ENCODE measurements at regions of chr9 and their contacts with region 1.

Region 1: GRCh38 chr9:111896353-111896958 is at the start of gene UGCG:
- DNase-seq: peak; percentile 80 to 95 (median 92)
- ATAC-seq: peak; percentile 97
- H3K4me3 ChIP-seq: peak within 1 kb of the TSS; percentile 87
- H3K4me3 Mint-ChIP-seq: peak within 1 kb of the TSS in 7 of 10 donors; percentile 91 to 96 (median 95)
- H3K27ac ChIP-seq: peak within 1 kb of the TSS; percentile 80
- H3K27ac Mint-ChIP-seq: peak within 1 kb of the TSS; percentile 88 to 95 (median 94)
- H3K4me1 ChIP-seq: peaks cover 17 to 40% of the 10 kb centered on the region in 2 donors
- H3K4me1 Mint-ChIP-seq: peaks cover 7 to 32% (median 29%) of the 10 kb centered on the region in 7 donors
- H3K27me3 ChIP-seq: no peaks in the 10 kb centered on the region
- H3K27me3 Mint-ChIP-seq: no peaks in the 10 kb centered on the region
- total RNA-seq, gene UGCG: 21.1 to 40.9 (median 24.5) TPM

Region 2: DNA sequence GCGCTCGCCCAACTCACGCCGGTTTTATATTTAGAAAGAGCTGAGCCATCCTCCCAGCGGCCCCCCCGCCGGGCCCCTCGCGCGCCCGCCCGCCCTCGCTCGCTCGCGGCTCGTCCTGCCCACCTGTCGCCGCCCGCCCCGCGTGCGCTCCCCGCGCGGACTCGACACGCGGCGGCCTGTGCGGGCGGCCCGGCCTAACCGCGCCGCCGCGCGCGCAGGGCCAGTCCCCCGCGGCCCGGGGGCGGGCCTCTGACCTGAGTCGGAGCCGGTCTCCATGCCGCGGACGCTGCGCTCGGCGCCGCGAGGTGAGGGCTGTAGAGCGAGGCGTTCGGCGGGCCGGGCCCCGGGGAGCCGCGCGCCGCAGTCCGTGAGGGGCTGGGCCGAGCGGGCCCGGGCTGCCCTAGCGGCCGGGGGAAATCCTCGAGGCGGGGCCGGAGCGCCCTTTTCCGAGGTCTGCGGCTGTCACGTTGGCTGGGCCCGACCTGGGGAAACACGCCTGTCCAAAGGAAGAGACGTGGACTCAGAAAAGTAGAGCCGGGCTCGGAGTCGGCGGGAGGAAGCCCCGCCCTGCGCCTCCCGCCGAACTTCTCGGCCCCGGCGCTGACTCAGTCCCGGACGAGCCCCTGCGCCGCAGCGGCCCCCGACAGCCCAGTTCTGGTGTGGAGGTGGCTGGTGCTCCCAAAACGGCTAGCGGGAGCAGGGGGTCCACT is 412.4 kb before region 1 on chr9 and contains the start of gene ECPAS:
- CTCF ChIA-PET with region 1: no interaction called
- POLR2A ChIA-PET with region 1: no interaction called
- intact Hi-C with region 1: loop called (anchors 1 kb)
- DNase-seq: peak; percentile 53 to 78 (median 62)
- ATAC-seq: peak; percentile 74
- H3K4me3 ChIP-seq: peak within 1 kb of the TSS; percentile 66
- H3K4me3 Mint-ChIP-seq: peak within 1 kb of the TSS; percentile 69 to 93 (median 88)
- H3K27ac ChIP-seq: peak within 1 kb of the TSS; percentile 74
- H3K27ac Mint-ChIP-seq: peak within 1 kb of the TSS; percentile 60 to 92 (median 85)
- H3K4me1 ChIP-seq: peaks cover 0 to 8% of the 10 kb centered on the region in 2 donors
- H3K4me1 Mint-ChIP-seq: peaks cover 16 to 31% (median 27%) of the 10 kb centered on the region in 7 donors
- H3K27me3 ChIP-seq: no peaks in the 10 kb centered on the region
- H3K27me3 Mint-ChIP-seq: peaks cover 0 to 13% (median 5%) of the 10 kb centered on the region in 5 donors
- total RNA-seq, gene ECPAS: 35.4 to 86.1 (median 49.2) TPM

Region 3: DNA sequence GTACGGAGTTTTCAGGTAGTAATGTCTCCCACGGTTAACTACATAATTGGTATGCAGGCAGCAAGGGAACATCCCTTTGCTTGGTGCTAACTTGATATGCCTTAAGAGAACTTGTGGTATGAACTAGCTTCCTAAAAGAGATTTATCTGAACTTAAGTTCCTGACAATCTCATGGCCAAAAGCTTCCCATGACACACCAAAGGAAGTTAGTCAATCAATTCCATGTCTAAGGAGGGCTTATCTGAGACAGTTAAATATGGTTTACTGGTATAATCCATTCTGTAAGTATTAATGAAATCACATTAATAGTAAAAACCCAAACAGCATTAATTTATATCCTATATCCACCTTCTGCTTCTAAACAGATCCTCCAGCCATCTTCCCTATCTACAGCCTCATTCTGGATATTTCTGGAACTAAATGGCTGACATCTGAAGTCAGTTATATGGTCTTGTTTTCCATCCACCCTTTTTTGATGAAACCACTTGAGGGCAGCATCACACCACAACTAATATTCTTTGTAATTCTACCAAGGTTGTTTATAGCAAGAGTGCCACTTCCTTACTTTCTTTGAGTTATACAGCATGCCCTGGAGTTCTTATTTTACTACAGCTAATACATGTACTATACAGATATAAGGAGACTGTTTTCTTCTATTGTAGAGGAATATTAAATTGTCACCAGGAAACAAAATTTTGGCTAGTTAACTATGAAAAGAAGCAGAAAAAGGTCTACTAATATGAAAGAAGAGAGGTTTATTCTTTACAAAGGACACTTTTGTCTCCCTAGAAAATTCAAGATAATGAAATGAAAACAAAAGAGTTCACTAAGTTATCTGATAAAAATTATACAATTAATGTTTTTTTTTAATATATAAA is 136.5 kb before region 1 on chr9:
- CTCF ChIA-PET with region 1: interaction called, 3 read pairs
- POLR2A ChIA-PET with region 1: no interaction called
- intact Hi-C with region 1: loop called (anchors 10 kb)
- DNase-seq: peak in 8 of 9 donors; percentile 25 to 77 (median 68)
- ATAC-seq: peak; percentile 82
- H3K4me3 ChIP-seq: no peak overlapping the region
- H3K4me3 Mint-ChIP-seq: no peak overlapping the region
- H3K27ac ChIP-seq: no peak overlapping the region
- H3K27ac Mint-ChIP-seq: no peak overlapping the region
- H3K4me1 ChIP-seq: no peaks in the 10 kb centered on the region
- H3K4me1 Mint-ChIP-seq: peaks cover 3 to 8% (median 5%) of the 10 kb centered on the region in 7 donors
- H3K27me3 ChIP-seq: no peaks in the 10 kb centered on the region
- H3K27me3 Mint-ChIP-seq: no peaks in the 10 kb centered on the region

Region 4: DNA sequence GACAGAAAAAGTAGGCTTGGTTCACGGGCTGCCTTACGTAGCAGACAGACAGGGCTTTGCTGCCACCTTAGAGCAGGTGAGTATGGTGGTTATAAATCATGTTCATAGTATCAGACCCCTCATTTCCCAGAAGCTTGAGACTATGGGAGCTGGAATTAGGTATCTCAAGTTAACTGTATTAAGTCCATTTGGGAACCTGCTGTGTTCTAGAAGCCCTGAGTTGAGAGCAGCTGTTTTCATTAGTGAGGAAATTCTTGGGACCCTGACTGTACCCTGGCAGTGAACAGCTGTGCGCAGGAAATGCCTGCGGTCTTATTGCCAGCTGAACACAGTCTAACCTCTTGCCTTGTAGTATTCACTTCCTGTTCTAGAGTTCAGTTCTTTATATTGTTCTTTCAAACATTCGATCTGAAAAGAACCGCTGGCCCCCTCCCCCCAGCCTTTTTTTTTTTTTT is 30.0 kb after region 1 on chr9:
- CTCF ChIA-PET with region 1: interaction called, 3 read pairs
- POLR2A ChIA-PET with region 1: interaction called, 49 read pairs
- intact Hi-C with region 1: loop called (anchors 1 kb)
- DNase-seq: peak in 7 of 9 donors; percentile 75 to 86 (median 82)
- ATAC-seq: peak; percentile 98
- H3K4me3 ChIP-seq: no peak overlapping the region
- H3K4me3 Mint-ChIP-seq: peak overlapping the region; percentile 61 to 79 (median 72)
- H3K27ac ChIP-seq: peak overlapping the region; percentile 23
- H3K27ac Mint-ChIP-seq: peak overlapping the region; percentile 79 to 94 (median 91)
- H3K4me1 ChIP-seq: peaks cover 29 to 35% of the 10 kb centered on the region in 2 donors
- H3K4me1 Mint-ChIP-seq: peaks cover 21 to 67% (median 50%) of the 10 kb centered on the region in 7 donors
- H3K27me3 ChIP-seq: no peaks in the 10 kb centered on the region
- H3K27me3 Mint-ChIP-seq: no peaks in the 10 kb centered on the region

Region 5: DNA sequence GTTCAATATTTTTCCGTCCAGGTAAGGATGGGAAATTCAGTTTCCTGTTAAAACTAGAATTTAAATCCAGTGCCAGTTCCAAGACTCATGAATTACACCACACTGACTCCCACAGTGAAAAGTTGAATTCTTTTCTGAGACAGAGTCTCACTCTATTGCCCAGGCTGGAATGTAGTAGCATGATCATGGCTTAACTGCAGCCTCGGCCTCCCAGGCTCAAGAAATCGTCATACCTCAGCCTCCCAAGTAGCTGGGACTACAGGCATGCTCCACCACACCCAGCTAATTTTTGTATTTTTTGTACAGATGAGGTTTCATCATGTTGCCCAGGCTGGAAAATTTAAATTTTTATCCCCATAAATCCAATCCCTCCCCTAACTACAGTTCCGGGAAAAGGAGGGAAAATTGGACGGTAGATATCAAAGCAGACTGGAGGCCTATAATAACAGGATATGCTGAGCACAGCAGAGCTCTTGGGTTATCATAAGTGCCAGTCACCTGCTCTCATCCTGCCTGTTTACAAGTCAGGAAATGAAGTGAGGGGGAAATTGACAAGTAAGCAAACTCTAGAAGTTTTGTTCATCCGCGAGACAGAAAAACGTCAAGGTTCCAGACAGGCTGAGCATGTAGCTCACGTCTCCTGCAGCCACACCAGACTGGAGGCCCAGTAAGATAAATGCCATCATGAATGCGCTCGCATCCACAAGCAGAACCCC is 105.8 kb after region 1 on chr9:
- CTCF ChIA-PET with region 1: no interaction called
- POLR2A ChIA-PET with region 1: interaction called, 18 read pairs
- intact Hi-C with region 1: loop called in 1 of 2 experiments (anchors 1 kb)
- DNase-seq: peak in 7 of 9 donors; percentile 39 to 75 (median 66)
- ATAC-seq: peak; percentile 77
- H3K4me3 ChIP-seq: peak overlapping the region; percentile 19
- H3K4me3 Mint-ChIP-seq: peak overlapping the region in 9 of 10 donors; percentile 1 to 80 (median 61)
- H3K27ac ChIP-seq: no peak overlapping the region
- H3K27ac Mint-ChIP-seq: peak overlapping the region; percentile 29 to 85 (median 78)
- H3K4me1 ChIP-seq: peaks cover 4 to 17% of the 10 kb centered on the region in 2 donors
- H3K4me1 Mint-ChIP-seq: peaks cover 17 to 56% (median 27%) of the 10 kb centered on the region in 7 donors
- H3K27me3 ChIP-seq: no peaks in the 10 kb centered on the region
- H3K27me3 Mint-ChIP-seq: peaks cover 0 to 30% (median 0%) of the 10 kb centered on the region in 5 donors

Region 6: GRCh38 chr9:112174218-112174964 is 277.9 kb after region 1 on chr9:
- CTCF ChIA-PET with region 1: no interaction called
- POLR2A ChIA-PET with region 1: interaction called, 3 read pairs
- intact Hi-C with region 1: loop called (anchors 5 to 10 kb)
- DNase-seq: peak; percentile 42 to 80 (median 63)
- ATAC-seq: peak; percentile 87
- H3K4me3 ChIP-seq: peak overlapping the region; percentile 67
- H3K4me3 Mint-ChIP-seq: peak overlapping the region; percentile 83 to 94 (median 90)
- H3K27ac ChIP-seq: peak overlapping the region; percentile 9
- H3K27ac Mint-ChIP-seq: peak overlapping the region; percentile 65 to 95 (median 87)
- H3K4me1 ChIP-seq: peaks cover 33 to 54% of the 10 kb centered on the region in 2 donors
- H3K4me1 Mint-ChIP-seq: peaks cover 49 to 81% (median 73%) of the 10 kb centered on the region in 7 donors
- H3K27me3 ChIP-seq: no peaks in the 10 kb centered on the region
- H3K27me3 Mint-ChIP-seq: peaks cover 0 to 3% (median 0%) of the 10 kb centered on the region in 5 donors

Region 7: DNA sequence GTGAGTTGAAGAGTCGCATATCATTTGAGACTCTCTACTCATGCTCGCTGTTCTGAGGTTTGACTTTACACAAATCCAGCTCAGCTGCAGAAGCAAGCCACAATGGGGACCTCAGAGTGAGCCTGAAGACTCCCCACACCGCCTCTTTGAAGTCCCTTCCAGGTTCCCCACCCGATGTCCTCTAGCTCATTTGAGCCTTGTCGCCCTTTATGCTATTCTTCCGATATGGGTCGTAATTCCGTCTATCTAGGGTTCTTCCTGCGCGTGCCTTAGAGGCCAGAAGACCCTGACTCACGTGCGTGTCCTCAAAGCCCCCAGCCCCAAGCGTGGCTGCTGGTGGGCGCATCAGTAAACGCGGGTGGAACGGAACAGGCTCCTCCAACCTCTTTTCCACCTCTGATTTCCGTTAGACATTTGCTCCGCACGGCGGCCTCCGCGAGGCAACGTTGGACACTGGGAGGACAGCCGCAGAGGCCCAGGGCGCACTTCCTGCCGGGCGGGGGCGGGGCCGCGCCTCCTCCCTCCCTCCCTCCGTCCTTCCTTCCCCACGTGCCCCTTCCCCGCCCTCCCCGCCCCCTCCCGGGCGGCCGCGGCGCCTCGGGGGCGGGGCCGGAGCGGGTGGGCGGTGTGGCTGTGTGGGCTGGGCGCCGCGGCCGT is 853.8 kb after region 1 on chr9 and contains the start of gene SNX30:
- CTCF ChIA-PET with region 1: no interaction called
- POLR2A ChIA-PET with region 1: no interaction called
- intact Hi-C with region 1: loop called (anchors 2 to 5 kb)
- DNase-seq: peak; percentile 66 to 83 (median 75)
- ATAC-seq: peak; percentile 94
- H3K4me3 ChIP-seq: peak within 1 kb of the TSS; percentile 70
- H3K4me3 Mint-ChIP-seq: peak within 1 kb of the TSS; percentile 88 to 94 (median 92)
- H3K27ac ChIP-seq: peak within 1 kb of the TSS; percentile 68
- H3K27ac Mint-ChIP-seq: peak within 1 kb of the TSS; percentile 88 to 98 (median 96)
- H3K4me1 ChIP-seq: peaks cover 46% of the 10 kb centered on the region in 2 donors
- H3K4me1 Mint-ChIP-seq: peaks cover 39 to 66% (median 60%) of the 10 kb centered on the region in 7 donors
- H3K27me3 ChIP-seq: no peaks in the 10 kb centered on the region
- H3K27me3 Mint-ChIP-seq: peaks cover 0 to 4% (median 0%) of the 10 kb centered on the region in 5 donors
- total RNA-seq, gene SNX30: 6.6 to 15.8 (median 9.2) TPM